ENCODE measurements at regions of chr2 and their contacts with region 1.

Region 1: GRCh38 chr2:96116879-96117697 is 717 bp upstream of the ADRA2B start:
- DNase-seq: peak; percentile 83

Region 2: DNA sequence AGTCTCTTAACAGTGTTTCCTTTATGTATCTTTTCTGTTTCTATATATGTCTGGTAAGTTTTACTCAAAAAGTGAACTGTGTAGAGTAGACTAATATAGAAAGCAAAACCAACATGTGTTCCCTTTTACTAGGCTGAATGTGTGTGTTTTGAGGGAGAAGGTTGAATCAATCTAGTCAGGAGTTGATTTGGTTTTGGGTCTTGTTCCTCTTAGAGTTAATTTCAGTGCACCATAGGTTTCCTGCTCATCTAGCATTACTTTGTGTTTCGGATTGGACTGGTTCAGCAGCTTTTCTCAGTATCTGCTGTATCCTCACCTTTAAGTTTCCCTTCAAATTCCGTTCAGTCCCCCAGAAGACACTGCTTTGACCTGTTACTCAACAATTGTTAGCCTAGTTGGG is 577.3 kb before region 1 on chr2:
- intact Hi-C with region 1: no loop called
- DNase-seq: no peak

Region 3: GRCh38 chr2:96024336-96025193 is 92.5 kb before region 1 on chr2:
- intact Hi-C with region 1: loop called in 1 of 2 experiments (anchors 10 kb)
- DNase-seq: peak; percentile 58

Region 4: DNA sequence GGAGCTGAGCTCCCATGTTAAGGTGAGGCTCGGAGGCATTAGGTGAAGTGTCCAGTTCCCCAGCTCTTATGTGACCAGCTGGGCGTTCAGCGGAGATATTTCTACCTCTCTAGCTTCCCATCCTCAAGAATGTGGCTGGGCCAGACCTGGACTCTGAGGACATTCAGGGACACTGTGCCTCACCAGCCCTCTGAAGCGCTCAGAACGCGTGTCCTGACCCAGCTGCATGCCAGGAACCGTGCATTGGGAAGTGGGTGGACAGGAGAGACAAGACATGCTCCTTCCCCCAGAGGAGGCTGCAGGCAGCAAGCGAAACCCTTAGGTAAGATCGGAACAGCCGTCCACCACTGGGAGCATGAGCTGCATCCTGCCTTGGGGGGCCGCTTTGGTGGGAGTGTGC is 44.3 kb before region 1 on chr2:
- intact Hi-C with region 1: loop called in 1 of 2 experiments (anchors 5 kb)
- DNase-seq: peak; percentile 53

Region 5: DNA sequence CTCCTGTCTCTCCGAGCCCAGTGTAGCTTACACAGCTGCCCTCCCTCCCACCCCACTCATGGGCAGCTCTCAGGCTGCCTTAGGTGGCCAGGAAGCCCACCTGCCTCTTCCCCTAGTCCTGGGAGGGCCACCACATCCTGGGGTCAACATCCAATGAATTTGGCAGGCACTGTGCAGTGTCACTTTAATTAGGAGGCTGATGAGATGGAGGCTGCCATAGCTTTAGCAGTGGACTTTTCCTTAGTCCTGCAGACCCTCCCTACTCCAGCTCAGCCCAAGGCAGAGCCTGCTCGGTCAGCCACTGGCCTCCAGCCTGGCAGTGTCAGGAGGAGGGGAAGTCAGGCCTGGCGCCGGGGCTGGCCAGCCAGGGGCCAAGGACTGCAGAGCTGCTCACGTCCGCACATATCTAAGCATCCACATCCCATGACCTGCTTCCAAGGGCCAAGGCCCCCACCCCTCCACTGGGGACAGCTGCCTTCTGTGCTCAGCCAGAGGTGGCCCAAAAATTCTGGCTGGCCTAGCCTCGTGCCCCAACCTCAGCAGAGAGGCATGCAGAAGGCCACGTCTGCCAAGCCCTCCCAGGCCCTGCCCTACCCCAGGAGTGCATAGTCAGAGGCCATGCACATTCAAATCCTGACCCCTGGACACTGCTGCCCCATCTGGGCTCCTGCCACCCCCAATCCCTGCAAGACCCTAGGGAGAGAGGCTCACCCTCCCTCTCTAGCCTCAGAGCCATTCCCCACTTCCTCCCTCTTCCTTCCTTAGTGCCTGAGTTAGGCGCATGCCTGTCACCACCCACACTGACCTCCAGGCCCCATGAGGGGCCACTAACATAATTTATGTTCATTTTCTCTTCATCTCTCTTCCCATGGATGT is 33.8 kb before region 1 on chr2:
- intact Hi-C with region 1: loop called in 1 of 2 experiments (anchors 5 kb)
- DNase-seq: peak; percentile 83